ENCODE measurements at regions of chr15 and their contacts with region 1.

Region 1: GRCh38 chr15:48602358-48603122 is 43.0 kb downstream of the FBN1 start:
- DNase-seq: no peak
- ATAC-seq: peak; percentile 58
- H3K4me3 ChIP-seq: peak overlapping the region in 1 of 2 donors; percentile 34
- H3K27ac ChIP-seq: peak overlapping the region in 1 of 2 donors; percentile 89
- H3K4me1 ChIP-seq: peaks cover 1 to 2% of the 10 kb centered on the region in 2 donors
- H3K27me3 ChIP-seq: no peaks in the 10 kb centered on the region

Region 2: DNA sequence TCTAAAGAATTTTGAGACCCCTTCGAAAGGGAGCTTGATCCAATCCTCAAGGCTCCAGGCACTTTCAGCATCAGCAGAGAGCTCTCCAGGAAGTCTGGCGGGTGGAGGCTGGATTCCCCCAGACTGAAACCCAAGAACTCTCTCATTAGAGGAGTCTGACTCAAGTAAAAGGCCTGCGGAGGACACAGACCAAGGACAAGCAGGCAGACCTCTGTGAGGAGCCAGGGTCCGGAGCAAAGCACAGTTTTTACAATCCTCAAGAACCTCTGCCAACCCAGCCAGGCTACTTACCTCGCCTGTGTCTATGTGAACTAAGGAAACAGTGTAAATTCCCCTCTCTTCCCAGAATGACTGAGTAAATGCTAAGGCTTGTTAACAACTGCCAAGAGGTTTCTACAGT is 43.3 kb before region 1 on chr15:
- intact Hi-C with region 1: loop called in 1 of 2 experiments (anchors 5 kb)
- DNase-seq: peak in 1 of 2 donors; percentile 71
- ATAC-seq: peak; percentile 78
- H3K4me3 ChIP-seq: no peak overlapping the region
- H3K27ac ChIP-seq: peak overlapping the region in 1 of 2 donors; percentile 92
- H3K4me1 ChIP-seq: peaks cover 11 to 25% of the 10 kb centered on the region in 2 donors
- H3K27me3 ChIP-seq: no peaks in the 10 kb centered on the region

Region 3: GRCh38 chr15:48636511-48636910 is 34.0 kb after region 1 on chr15:
- intact Hi-C with region 1: loop called (anchors 5 kb)
- DNase-seq: peak in 1 of 2 donors; percentile 43
- ATAC-seq: no peak
- H3K4me3 ChIP-seq: no peak overlapping the region
- H3K27ac ChIP-seq: no peak overlapping the region
- H3K4me1 ChIP-seq: peaks cover 5 to 11% of the 10 kb centered on the region in 2 donors
- H3K27me3 ChIP-seq: no peaks in the 10 kb centered on the region